Psoas muscle (tissue), 8 donors: ENCODE measurements at regions of chr14 and their contacts with region 1.

Region 1: GRCh38 chr14:89185919-89186855 is 230.8 kb downstream of the FOXN3 start:
- DNase-seq: peak in 1 of 2 donors; percentile 69
- ATAC-seq: peak; percentile 79 to 90 (median 86)
- H3K4me3 ChIP-seq: peak overlapping the region; percentile 44
- H3K27ac ChIP-seq: peak overlapping the region; percentile 92
- H3K4me1 ChIP-seq: peaks cover 45% of the 10 kb centered on the region
- H3K27me3 ChIP-seq: no peaks in the 10 kb centered on the region
- CTCF ChIP-seq: no peak

Region 2: GRCh38 chr14:89232265-89233070 is 46.3 kb after region 1 on chr14:
- intact Hi-C with region 1: loop called in 1 of 2 experiments (anchors 5 kb)
- DNase-seq: no peak
- ATAC-seq: peak in 2 of 4 donors; percentile 11 to 38
- H3K4me3 ChIP-seq: no peak overlapping the region
- H3K27ac ChIP-seq: peak overlapping the region; percentile 63
- H3K4me1 ChIP-seq: peaks cover 38% of the 10 kb centered on the region
- H3K27me3 ChIP-seq: no peaks in the 10 kb centered on the region
- CTCF ChIP-seq: no peak